ENCODE measurements at regions of chr1 and their contacts with region 1.

Region 1: DNA sequence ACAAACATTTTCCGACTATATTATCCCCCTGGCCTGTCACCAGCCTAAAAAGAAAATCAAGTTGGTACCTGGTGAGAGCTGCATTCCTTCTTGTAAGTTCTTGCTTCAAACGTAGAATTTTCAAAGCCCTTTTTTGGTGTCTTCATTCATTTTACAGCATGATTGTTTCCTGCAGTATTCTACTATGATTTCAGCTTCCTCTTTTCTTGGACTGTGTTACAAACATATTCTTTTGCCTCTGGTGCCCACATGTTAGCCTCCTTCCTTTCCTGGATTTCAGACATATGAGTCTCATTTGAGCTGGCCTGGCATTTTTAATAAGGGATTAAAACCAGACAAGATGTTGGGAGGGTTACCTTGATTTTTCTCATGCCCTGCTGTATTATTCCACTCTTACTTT is 142.5 kb downstream of the PIGK start:
- DNase-seq: no peak
- H3K4me3 ChIP-seq: no peak overlapping the region
- H3K27ac ChIP-seq: no peak overlapping the region
- H3K4me1 ChIP-seq: no peaks in the 10 kb centered on the region
- H3K27me3 ChIP-seq: no peaks in the 10 kb centered on the region
- CTCF ChIP-seq: no peak

Region 2: GRCh38 chr1:76176020-76176419 is 900.7 kb before region 1 on chr1:
- CTCF ChIA-PET with region 1: no interaction called
- dilution Hi-C with region 1: no loop called
- in situ Hi-C with region 1: no loop called
- intact Hi-C with region 1: loop called (anchors 5 kb)
- DNase-seq: no peak
- H3K4me3 ChIP-seq: no peak overlapping the region
- H3K27ac ChIP-seq: no peak overlapping the region
- H3K4me1 ChIP-seq: no peaks in the 10 kb centered on the region
- H3K27me3 ChIP-seq: no peaks in the 10 kb centered on the region
- CTCF ChIP-seq: no peak

Region 3: DNA sequence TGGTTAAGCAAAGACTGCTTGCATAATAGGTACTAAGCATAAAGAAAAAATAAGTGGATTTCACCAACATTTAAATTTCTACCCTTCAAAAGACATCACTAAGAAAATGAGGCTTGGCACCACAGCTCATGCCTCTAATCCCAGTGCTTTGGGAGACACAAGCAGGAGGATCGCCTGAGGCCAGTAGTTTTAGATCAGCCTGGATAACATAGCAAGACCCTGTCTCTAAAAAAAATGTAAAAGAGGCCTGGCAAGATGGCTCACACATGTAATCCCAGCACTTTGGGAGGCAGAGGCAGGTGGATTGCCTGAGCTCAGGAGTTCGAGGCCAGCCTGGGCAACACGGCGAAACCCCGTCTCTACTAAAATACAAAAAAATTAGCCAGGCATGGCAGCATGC is 69.5 kb after region 1 on chr1:
- CTCF ChIA-PET with region 1: no interaction called
- dilution Hi-C with region 1: no loop called
- in situ Hi-C with region 1: no loop called
- intact Hi-C with region 1: no loop called
- DNase-seq: no peak
- H3K4me3 ChIP-seq: no peak overlapping the region
- H3K27ac ChIP-seq: no peak overlapping the region
- H3K4me1 ChIP-seq: no peaks in the 10 kb centered on the region
- H3K27me3 ChIP-seq: no peaks in the 10 kb centered on the region
- CTCF ChIP-seq: no peak